Activated CD4-positive, alpha-beta T cell treated with anti-CD3 and anti-CD28 coated beads, Interleukin-2, amount 10 ng/mL, durations not matched to agents 24 days and 14 days (primary cell): ENCODE measurements at regions of chr11 and their contacts with region 1.

Region 1: GRCh38 chr11:46889689-46890475 is 28.5 kb downstream of the LRP4 start:
- DNase-seq: peak; percentile 93
- H3K4me3 Mint-ChIP-seq: no peak overlapping the region
- H3K27ac Mint-ChIP-seq: no peak overlapping the region
- H3K4me1 Mint-ChIP-seq: peaks cover 3% of the 10 kb centered on the region
- H3K27me3 Mint-ChIP-seq: peaks cover 1% of the 10 kb centered on the region

Region 2: GRCh38 chr11:46845740-46846509 is 44.0 kb before region 1 on chr11 and contains the start of gene CKAP5:
- intact Hi-C with region 1: no loop called
- DNase-seq: peak; percentile 97
- H3K4me3 Mint-ChIP-seq: peak within 1 kb of the TSS; percentile 88
- H3K27ac Mint-ChIP-seq: peak within 1 kb of the TSS; percentile 97
- H3K4me1 Mint-ChIP-seq: peaks cover 35% of the 10 kb centered on the region
- H3K27me3 Mint-ChIP-seq: no peaks in the 10 kb centered on the region
- total RNA-seq, gene CKAP5: 124 and 133 TPM in 2 replicates

Region 3: GRCh38 chr11:47020793-47021526 is 131.1 kb after region 1 on chr11:
- intact Hi-C with region 1: no loop called
- DNase-seq: no peak
- H3K4me3 Mint-ChIP-seq: no peak overlapping the region
- H3K27ac Mint-ChIP-seq: no peak overlapping the region
- H3K4me1 Mint-ChIP-seq: peaks cover 2% of the 10 kb centered on the region
- H3K27me3 Mint-ChIP-seq: peaks cover 3% of the 10 kb centered on the region

Region 4: DNA sequence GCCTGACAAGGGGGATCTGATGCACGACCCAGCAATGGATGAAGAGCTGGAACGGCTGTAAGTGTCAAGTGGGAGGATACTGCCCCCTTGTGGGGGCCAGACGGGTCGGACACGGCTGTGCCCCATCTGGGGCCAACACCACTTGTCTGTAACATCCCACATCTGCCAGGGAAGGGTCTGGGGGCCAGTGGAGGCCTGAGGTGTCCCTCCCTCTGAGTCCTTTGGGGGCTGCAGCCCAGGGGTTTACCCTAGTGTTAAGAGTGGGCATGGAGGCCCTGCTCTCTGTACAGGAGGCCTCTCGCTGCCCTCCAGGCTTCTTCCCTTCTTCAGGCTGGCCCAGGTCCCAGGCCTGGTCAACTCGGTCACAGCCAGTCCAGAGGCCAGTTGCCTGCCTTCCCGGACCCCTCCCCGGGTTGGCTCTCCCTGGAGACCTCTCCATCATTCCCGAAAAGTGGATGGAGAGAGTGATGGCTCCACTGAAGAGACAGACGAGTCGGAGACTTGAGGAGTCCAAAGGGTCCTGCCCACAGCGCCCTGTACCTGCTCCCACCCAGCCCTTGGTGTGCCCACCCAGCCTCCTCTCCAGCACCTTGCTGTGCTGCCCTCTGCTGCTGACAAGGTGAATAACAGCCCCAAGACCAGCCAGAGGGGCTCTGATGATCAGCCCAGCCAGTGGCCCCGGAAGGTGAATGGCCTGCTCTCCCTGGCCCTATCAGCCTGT is 271.4 kb after region 1 on chr11:
- intact Hi-C with region 1: loop called (anchors 1 kb)
- DNase-seq: peak; percentile 87
- H3K4me3 Mint-ChIP-seq: no peak overlapping the region
- H3K27ac Mint-ChIP-seq: no peak overlapping the region
- H3K4me1 Mint-ChIP-seq: no peaks in the 10 kb centered on the region
- H3K27me3 Mint-ChIP-seq: no peaks in the 10 kb centered on the region